ENCODE measurements at regions of chr2 and their contacts with region 1.

Region 1: GRCh38 chr2:176157499-176158185 is 535 bp downstream of the HOXD3 start:
- DNase-seq: no peak
- ATAC-seq: no peak
- H3K4me3 ChIP-seq: no peak overlapping the region
- H3K4me3 Mint-ChIP-seq: peak overlapping the region; percentile 32 to 78 (median 59)
- H3K27ac ChIP-seq: no peak overlapping the region
- H3K27ac Mint-ChIP-seq: peak overlapping the region in 2 of 9 donors; percentile 28 to 87
- H3K4me1 ChIP-seq: peaks cover 0 to 6% of the 10 kb centered on the region in 2 donors
- H3K4me1 Mint-ChIP-seq: peaks cover 0 to 22% (median 18%) of the 10 kb centered on the region in 7 donors
- H3K27me3 ChIP-seq: peaks cover 8 to 50% of the 10 kb centered on the region in 2 donors
- H3K27me3 Mint-ChIP-seq: peaks cover 70 to 91% (median 88%) of the 10 kb centered on the region in 5 donors

Region 2: GRCh38 chr2:176079831-176080539 is 77.7 kb before region 1 on chr2:
- CTCF ChIA-PET with region 1: no interaction called
- POLR2A ChIA-PET with region 1: no interaction called
- intact Hi-C with region 1: loop called in 1 of 2 experiments (anchors 2 kb)
- DNase-seq: no peak
- ATAC-seq: peak; percentile 48
- H3K4me3 ChIP-seq: no peak overlapping the region
- H3K4me3 Mint-ChIP-seq: peak overlapping the region; percentile 64 to 82 (median 76)
- H3K27ac ChIP-seq: no peak overlapping the region
- H3K27ac Mint-ChIP-seq: peak overlapping the region in 6 of 9 donors; percentile 58 to 98 (median 90)
- H3K4me1 ChIP-seq: peaks cover 0 to 7% of the 10 kb centered on the region in 2 donors
- H3K4me1 Mint-ChIP-seq: peaks cover 0 to 29% (median 15%) of the 10 kb centered on the region in 7 donors
- H3K27me3 ChIP-seq: peaks cover 41 to 79% of the 10 kb centered on the region in 2 donors
- H3K27me3 Mint-ChIP-seq: peaks cover 67 to 83% (median 80%) of the 10 kb centered on the region in 5 donors

Region 3: DNA sequence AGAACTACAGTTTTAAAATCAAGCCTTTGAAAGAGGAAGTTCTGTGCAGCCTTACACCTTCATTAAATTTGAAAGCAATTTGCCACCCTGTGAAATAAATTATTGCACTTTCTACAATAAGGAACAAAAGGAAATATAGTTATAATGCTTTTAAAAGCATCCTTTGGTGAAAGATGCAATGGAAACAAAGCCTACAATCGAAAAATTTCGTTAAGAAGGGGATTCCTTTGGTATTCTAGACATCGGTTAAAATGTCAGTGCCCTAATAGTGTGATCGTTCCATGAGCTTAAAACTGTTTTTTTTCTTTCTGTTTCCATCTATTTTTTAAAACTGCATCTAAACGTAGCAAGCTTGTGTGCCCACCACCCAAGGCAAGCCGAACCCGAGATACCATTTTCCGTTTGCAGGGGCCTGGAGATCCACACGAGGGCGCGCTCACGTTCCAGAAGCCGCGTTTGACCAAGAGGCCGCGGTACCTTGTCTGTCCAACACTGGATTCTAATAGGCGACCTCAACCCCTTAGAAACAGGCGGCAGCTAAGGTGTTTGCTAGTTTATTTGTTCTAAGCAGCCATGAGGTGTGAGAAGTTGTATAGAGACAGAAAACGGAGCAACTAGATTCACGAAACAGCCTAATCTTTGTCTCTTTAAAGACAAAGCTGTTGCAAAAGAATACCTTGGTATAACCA is 46.5 kb before region 1 on chr2:
- CTCF ChIA-PET with region 1: no interaction called
- POLR2A ChIA-PET with region 1: no interaction called
- intact Hi-C with region 1: loop called in 1 of 2 experiments (anchors 5 kb)
- DNase-seq: no peak
- ATAC-seq: no peak
- H3K4me3 ChIP-seq: no peak overlapping the region
- H3K4me3 Mint-ChIP-seq: peak overlapping the region in 3 of 10 donors; percentile 3 to 30 (median 11)
- H3K27ac ChIP-seq: no peak overlapping the region
- H3K27ac Mint-ChIP-seq: peak overlapping the region in 4 of 9 donors; percentile 21 to 71 (median 44)
- H3K4me1 ChIP-seq: peaks cover 0 to 15% of the 10 kb centered on the region in 2 donors
- H3K4me1 Mint-ChIP-seq: peaks cover 5 to 25% (median 16%) of the 10 kb centered on the region in 7 donors
- H3K27me3 ChIP-seq: peaks cover 21 to 79% of the 10 kb centered on the region in 2 donors
- H3K27me3 Mint-ChIP-seq: peaks cover 72 to 87% (median 77%) of the 10 kb centered on the region in 5 donors

Region 4: GRCh38 chr2:176132205-176133171 is 25.2 kb before region 1 on chr2:
- CTCF ChIA-PET with region 1: no interaction called
- POLR2A ChIA-PET with region 1: interaction called, 3 read pairs
- intact Hi-C with region 1: loop called in 1 of 2 experiments (anchors 2 kb)
- DNase-seq: no peak
- ATAC-seq: no peak
- H3K4me3 ChIP-seq: peak overlapping the region; percentile 38
- H3K4me3 Mint-ChIP-seq: peak overlapping the region; percentile 65 to 92 (median 75)
- H3K27ac ChIP-seq: no peak overlapping the region
- H3K27ac Mint-ChIP-seq: peak overlapping the region in 4 of 9 donors; percentile 6 to 57 (median 28)
- H3K4me1 ChIP-seq: peaks cover 3 to 16% of the 10 kb centered on the region in 2 donors
- H3K4me1 Mint-ChIP-seq: peaks cover 17 to 53% (median 49%) of the 10 kb centered on the region in 7 donors
- H3K27me3 ChIP-seq: peaks cover 42 to 71% of the 10 kb centered on the region in 2 donors
- H3K27me3 Mint-ChIP-seq: peaks cover 78 to 85% (median 83%) of the 10 kb centered on the region in 5 donors

Region 5: DNA sequence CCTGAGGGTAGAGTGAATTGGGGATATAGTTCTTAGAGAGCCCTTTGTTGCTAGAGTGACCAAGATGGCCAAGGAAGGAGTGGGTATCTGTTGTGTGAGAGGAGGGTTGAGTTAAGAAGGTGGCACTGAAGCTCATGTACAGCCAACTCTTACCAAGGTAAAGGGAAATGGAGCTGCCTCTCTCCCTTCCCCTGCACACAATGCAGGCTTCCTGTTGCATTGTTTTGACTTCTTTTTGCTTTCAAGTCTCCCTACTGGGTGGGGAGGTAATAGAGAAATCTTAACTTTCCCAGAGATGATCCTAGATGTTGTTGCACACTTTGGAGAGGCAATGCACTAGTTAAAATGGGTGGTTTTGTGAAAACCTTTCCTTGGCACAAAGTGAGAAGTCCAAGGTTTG is 54.6 kb after region 1 on chr2:
- CTCF ChIA-PET with region 1: no interaction called
- POLR2A ChIA-PET with region 1: no interaction called
- intact Hi-C with region 1: no loop called
- DNase-seq: no peak
- ATAC-seq: no peak
- H3K4me3 ChIP-seq: no peak overlapping the region
- H3K4me3 Mint-ChIP-seq: no peak overlapping the region
- H3K27ac ChIP-seq: no peak overlapping the region
- H3K27ac Mint-ChIP-seq: no peak overlapping the region
- H3K4me1 ChIP-seq: no peaks in the 10 kb centered on the region
- H3K4me1 Mint-ChIP-seq: no peaks in the 10 kb centered on the region
- H3K27me3 ChIP-seq: no peaks in the 10 kb centered on the region
- H3K27me3 Mint-ChIP-seq: peaks cover 20 to 27% (median 24%) of the 10 kb centered on the region in 5 donors

Region 6: GRCh38 chr2:176368349-176368748 is 210.7 kb after region 1 on chr2:
- CTCF ChIA-PET with region 1: no interaction called
- POLR2A ChIA-PET with region 1: no interaction called
- intact Hi-C with region 1: no loop called
- DNase-seq: no peak
- ATAC-seq: no peak
- H3K4me3 ChIP-seq: no peak overlapping the region
- H3K4me3 Mint-ChIP-seq: no peak overlapping the region
- H3K27ac ChIP-seq: no peak overlapping the region
- H3K27ac Mint-ChIP-seq: no peak overlapping the region
- H3K4me1 ChIP-seq: no peaks in the 10 kb centered on the region
- H3K4me1 Mint-ChIP-seq: no peaks in the 10 kb centered on the region
- H3K27me3 ChIP-seq: no peaks in the 10 kb centered on the region
- H3K27me3 Mint-ChIP-seq: peaks cover 9 to 21% (median 11%) of the 10 kb centered on the region in 5 donors